ENCODE measurements at regions of chr7 and their contacts with region 1.

Region 1: DNA sequence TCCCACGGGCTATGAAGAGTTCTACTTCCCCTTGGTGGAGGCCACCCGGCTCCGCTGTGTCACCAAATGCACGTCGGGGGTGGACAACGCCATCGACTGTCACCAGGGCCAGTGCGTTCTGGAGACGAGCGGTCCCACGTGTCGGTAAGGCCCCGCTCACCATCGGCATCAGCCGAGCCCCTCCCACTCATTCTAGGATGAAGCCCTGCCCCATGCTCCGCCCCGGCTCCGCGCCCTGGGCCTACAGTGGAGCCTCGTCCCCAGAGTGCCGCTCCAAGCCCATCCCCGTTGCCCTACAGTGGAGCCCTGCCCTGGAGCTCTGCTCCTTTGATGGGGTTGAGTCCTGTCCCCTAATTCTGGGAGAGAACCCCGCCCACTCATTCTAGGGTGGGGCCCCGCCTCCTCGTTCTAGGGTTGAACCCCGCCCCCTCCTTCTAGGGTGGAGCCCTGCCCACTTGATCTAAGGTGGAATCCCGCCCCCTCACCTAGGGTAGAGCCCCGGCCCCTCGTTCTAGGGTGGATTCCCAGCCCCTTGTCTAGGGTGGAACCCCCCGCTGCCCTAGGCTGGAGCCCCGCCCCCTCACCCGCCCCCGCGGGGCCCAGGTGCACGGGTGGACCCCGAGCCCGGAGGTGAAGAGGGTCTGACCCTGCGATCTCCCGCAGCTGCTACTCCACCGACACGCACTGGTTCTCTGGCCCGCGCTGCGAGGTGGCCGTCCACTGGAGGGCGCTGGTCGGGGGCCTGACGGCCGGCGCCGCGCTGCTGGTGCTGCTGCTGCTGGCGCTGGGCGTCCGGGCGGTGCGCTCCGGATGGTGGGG is 3.4 kb upstream of the MUC12 start:
- DNase-seq: peak; percentile 99
- ATAC-seq: peak; percentile 93
- H3K4me3 Mint-ChIP-seq: peak overlapping the region; percentile 94
- H3K27ac Mint-ChIP-seq: peak overlapping the region; percentile 94
- H3K4me1 Mint-ChIP-seq: peaks cover 39% of the 10 kb centered on the region
- H3K27me3 Mint-ChIP-seq: peaks cover 30% of the 10 kb centered on the region
- CTCF ChIP-seq: peak; percentile 90

Region 2: DNA sequence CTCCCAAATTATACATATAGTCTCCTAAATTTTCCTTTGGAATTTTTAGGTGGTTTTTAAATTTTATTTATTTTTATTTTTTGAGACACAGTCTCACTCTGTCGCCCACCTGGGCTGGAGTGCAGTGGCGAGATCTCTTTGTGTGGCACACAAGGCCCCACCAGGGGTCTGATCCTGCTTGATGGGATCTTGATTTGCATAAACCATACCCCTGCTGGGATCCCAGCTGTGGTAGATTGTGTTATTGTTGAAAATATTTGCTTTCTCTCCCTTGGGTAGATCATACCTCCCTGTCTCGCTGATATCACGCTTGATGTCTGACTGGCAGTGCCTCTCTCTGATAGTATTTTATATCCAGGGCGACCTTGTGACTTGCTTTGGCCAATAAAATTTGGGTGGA is 22.2 kb before region 1 on chr7:
- CTCF ChIA-PET with region 1: interaction called, 17 read pairs
- POLR2A ChIA-PET with region 1: no interaction called
- DNase-seq: no peak
- ATAC-seq: peak; percentile 62
- H3K4me3 Mint-ChIP-seq: no peak overlapping the region
- H3K27ac Mint-ChIP-seq: no peak overlapping the region; the same call in 1 of the 2 replicates
- H3K4me1 Mint-ChIP-seq: peaks cover 38% of the 10 kb centered on the region
- H3K27me3 Mint-ChIP-seq: peaks cover 3% of the 10 kb centered on the region; the same call in 1 of the 2 replicates
- CTCF ChIP-seq: no peak

Region 3: GRCh38 chr7:100949227-100949932 is 16.6 kb before region 1 on chr7 and contains the start of gene MUC3A:
- CTCF ChIA-PET with region 1: interaction called, 27 read pairs
- POLR2A ChIA-PET with region 1: interaction called, 12 read pairs
- DNase-seq: peak; percentile 46
- ATAC-seq: peak; percentile 25
- H3K4me3 Mint-ChIP-seq: peak within 1 kb of the TSS; percentile 18; the same call in 1 of the 2 replicates
- H3K27ac Mint-ChIP-seq: no peak within 1 kb of the TSS
- H3K4me1 Mint-ChIP-seq: peaks cover 40% of the 10 kb centered on the region
- H3K27me3 Mint-ChIP-seq: no peaks in the 10 kb centered on the region; the same call in 1 of the 2 replicates
- CTCF ChIP-seq: no peak
- total RNA-seq, gene MUC3A: 50.6 to 74.8 TPM (median 67.2 TPM) in 3 replicates

Region 4: DNA sequence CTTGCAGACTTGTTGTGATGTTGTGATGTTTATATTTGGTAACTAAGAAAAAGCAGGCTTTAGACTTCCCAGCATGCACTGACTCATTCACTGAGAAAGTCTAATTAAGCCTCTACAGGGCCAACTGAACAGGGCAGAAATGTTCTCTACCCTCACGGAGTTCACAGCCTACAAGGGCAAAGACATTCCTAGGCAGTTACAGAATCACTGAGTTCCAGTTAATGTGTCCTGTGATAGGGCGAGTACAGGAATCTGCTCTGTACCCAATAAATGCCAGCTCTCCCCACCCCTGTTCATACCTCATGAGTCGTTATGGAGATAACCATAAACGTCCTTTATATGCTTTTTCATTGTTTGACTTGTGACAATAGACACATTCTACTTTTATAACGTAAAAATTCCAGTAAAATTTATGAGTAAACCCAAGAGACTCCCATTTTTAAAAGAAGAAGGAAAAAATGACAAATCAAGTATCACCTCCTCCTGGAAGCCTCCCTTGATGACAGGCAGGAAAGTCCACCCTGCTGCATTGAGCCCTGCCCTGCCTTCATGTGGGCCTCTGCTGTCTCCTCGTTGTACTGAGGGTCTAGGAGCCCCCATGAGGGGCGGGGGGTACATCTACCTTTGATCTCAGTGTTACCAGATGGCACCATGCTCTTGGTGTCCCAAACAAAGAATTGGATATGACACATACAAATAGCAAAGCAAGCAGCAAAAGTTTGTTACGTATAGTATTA is 17.7 kb after region 1 on chr7:
- CTCF ChIA-PET with region 1: interaction called, 11 read pairs
- POLR2A ChIA-PET with region 1: no interaction called
- DNase-seq: no peak
- ATAC-seq: no peak
- H3K4me3 Mint-ChIP-seq: no peak overlapping the region
- H3K27ac Mint-ChIP-seq: no peak overlapping the region
- H3K4me1 Mint-ChIP-seq: no peaks in the 10 kb centered on the region
- H3K27me3 Mint-ChIP-seq: no peaks in the 10 kb centered on the region; the same call in 1 of the 2 replicates
- CTCF ChIP-seq: no peak

Region 5: DNA sequence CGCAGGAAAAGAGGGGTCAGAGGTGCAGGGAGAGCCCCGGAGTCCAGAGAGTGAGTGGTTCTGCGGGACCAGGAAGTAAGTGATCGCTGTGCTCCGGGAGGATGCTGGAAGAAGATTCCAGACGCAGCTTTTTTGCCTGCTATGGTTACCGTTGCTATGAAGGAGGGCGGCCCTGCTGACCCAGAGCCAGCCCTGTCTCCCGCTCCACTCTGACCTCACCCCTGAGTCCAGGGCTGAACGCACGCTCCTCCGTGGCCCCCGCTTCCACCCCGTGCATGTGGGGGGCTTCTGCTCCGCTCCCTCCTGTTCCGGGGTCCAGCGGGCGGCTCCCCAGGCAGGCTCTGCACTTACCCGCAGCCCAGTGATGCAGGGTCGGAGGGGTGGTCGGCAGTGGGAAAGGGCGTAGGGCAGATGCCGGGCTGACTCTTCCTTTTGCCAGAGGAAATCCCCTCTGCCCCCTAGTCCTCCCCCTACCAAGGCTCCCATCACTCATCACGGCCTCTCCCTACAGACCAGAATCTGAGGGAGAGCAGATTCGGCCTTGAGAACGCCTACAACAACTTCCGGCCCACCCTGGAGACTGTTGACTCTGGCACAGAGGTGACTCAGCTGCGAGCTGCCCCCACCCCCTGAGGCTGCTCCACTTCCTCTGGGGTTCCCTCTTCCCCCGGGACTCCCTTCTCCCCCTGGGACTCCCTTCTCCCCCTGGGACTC is 51.3 kb after region 1 on chr7:
- CTCF ChIA-PET with region 1: interaction called, 22 read pairs
- POLR2A ChIA-PET with region 1: interaction called, 4 read pairs
- DNase-seq: peak; percentile 56
- ATAC-seq: peak; percentile 52
- H3K4me3 Mint-ChIP-seq: peak overlapping the region; percentile 78
- H3K27ac Mint-ChIP-seq: no peak overlapping the region
- H3K4me1 Mint-ChIP-seq: peaks cover 21% of the 10 kb centered on the region
- H3K27me3 Mint-ChIP-seq: peaks cover 3% of the 10 kb centered on the region; the same call in 1 of the 2 replicates
- CTCF ChIP-seq: no peak

Region 6: DNA sequence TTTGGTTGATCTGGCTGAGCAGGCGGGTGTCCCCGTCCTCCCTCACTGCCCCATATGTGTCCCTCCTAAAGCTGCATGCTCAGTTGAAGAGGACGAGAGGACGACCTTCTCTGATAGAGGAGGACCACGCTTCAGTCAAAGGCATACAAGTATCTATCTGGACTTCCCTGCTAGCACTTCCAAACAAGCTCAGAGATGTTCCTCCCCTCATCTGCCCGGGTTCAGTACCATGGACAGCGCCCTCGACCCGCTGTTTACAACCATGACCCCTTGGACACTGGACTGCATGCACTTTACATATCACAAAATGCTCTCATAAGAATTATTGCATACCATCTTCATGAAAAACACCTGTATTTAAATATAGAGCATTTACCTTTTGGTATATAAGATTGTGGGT is 92.4 kb after region 1 on chr7:
- CTCF ChIA-PET with region 1: interaction called, 18 read pairs
- POLR2A ChIA-PET with region 1: no interaction called
- DNase-seq: peak; percentile 81
- ATAC-seq: peak; percentile 51; the same call in 1 of the 2 replicates
- H3K4me3 Mint-ChIP-seq: no peak overlapping the region
- H3K27ac Mint-ChIP-seq: no peak overlapping the region
- H3K4me1 Mint-ChIP-seq: peaks cover 2% of the 10 kb centered on the region; the same call in 1 of the 2 replicates
- H3K27me3 Mint-ChIP-seq: peaks cover 32% of the 10 kb centered on the region
- CTCF ChIP-seq: no peak

Region 7: DNA sequence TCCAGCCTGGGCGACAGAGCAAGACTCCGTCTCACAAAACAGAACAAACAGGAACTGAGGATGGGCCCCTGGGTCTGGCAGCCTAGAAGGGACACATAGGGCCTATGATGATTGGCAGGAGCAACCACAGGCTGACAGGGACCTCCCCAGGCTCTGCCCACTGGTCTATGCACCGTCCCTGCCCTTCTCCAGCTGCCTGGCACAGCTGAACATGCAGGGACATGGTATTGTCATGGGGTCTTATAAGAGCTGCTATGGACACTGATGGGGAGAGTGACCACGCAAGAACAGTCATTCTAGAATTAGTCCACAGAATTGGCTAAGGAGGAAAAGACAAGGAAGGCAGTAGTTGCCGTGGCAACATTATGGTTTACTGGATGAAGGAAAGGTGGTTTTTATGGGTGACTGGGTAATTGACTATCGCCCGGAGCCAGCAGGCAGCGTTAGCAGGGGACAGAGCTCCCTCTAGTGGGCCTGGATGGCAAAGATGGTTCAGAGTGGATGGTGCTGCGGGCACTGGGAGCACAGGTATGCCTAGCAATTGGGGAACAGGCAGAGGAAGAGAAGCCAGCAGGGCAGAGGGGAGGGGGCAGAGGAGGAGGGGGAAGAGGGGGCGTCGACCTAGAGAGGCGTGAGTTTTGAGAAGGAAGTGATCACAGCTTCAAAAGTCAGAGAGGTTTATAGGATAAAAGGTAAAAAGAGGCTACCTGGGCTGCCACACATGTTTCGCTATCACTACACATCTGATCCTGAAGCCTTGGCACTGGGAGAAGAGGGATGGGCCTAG is 111.6 kb after region 1 on chr7:
- CTCF ChIA-PET with region 1: interaction called, 10 read pairs
- POLR2A ChIA-PET with region 1: no interaction called
- DNase-seq: peak; percentile 96
- ATAC-seq: peak; percentile 99
- H3K4me3 Mint-ChIP-seq: no peak overlapping the region
- H3K27ac Mint-ChIP-seq: no peak overlapping the region
- H3K4me1 Mint-ChIP-seq: peaks cover 8% of the 10 kb centered on the region; the same call in 1 of the 2 replicates
- H3K27me3 Mint-ChIP-seq: no peaks in the 10 kb centered on the region
- CTCF ChIP-seq: peak; percentile 90

Measured in WTC11 (cell line).